ENCODE measurements at regions of chr10 and their contacts with region 1.

Region 1: DNA sequence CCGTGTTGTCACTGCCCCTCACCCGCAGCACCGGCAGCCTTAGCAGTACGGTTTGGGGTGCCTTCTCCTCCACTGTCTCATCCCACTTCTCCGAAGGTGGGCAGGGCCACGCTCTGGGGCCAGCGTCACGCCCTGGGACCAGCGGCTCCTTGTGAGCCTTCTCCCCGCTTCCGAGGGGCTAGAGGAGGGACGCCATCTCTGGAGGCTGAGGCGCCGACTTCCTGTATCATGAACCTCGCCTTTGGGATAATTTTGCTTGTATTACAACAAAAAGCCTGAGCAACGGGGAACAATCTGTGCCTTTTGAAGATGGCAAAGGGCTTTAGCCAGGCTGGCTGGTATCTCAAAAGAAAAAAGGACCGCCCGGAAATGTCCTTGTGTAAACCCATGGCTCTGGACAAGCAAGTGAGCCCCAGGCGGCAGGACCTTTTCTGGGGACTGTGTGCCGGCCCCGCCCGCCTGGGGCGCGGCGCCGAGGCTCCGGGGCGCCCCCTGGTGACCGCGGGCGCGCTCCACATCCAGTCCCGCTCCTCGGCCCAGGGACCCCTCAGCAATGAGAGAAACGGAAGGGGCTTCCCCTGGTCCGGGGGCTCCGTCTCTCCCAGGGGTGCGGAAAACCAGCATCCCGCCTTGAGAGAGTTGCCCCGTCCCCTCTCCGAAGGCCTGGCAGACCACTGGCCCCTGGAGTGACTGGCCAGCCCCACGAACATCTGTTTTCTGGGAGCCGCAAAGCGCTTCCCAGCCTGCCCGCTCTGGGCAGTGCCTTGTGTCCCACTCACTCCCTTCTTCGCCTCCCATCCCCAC is 3.8 kb downstream of the DEPP1 start:
- DNase-seq: peak; percentile 82 to 91 (median 88)
- ATAC-seq: peak; percentile 94
- H3K4me3 ChIP-seq: peak overlapping the region; percentile 35
- H3K27ac ChIP-seq: peak overlapping the region; percentile 51
- H3K4me1 ChIP-seq: peaks cover 29 to 51% of the 10 kb centered on the region in 2 experiments
- H3K27me3 ChIP-seq: peaks cover 0 to 4% of the 10 kb centered on the region in 2 experiments; a peak in 2 of 5 replicates
- CTCF ChIP-seq: peak; percentile 94 to 98 (median 97)
- EP300 ChIP-seq: no peak
- POLR2A ChIP-seq: peak; percentile 71
- RAD21 ChIP-seq: peak; percentile 88 to 89

Region 2: DNA sequence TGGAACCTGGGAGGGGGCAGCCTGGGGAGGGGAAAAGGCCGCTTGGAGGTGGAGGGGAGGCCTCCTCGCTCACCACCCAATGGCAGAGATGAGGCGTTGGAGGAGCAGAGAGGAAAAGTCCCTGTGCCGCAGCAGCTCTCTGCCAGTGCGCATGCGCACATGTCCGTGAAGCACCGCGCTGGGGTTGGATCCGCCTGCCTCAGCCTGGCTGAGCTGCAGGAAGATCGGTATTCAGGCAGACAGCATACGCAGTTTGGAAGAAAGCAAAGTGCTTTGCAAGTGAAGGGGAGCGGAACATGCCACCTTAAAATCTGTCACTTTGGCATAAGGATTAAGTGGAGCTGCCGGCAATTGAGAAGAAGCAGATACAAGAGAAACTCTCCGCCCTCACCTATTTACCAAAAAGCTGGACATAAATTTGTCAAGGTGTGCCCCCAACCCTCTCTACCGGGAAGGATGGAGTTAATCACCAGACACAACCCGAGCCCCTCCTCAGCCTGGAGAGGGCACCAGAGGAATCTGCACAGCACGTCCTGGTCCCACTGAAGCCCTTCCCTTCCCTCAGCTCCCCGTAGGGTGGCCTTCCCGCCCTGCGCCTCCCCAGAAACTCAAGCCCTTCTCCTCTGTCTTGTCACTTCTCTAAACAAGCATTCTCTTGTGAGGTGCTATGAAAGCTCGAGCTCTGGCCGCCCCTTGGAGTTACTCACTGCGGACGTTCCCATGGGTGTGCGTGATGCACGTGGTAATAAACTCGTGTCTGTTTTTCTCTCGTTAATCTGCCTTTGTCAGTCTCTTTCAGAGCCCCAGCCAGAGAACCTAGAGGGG is 95.9 kb before region 1 on chr10:
- CTCF ChIA-PET with region 1: no interaction called
- POLR2A ChIA-PET with region 1: no interaction called
- in situ Hi-C with region 1: no loop called
- intact Hi-C with region 1: loop called (anchors 5 kb)
- DNase-seq: peak; percentile 51 to 73 (median 68)
- ATAC-seq: peak; percentile 74
- H3K4me3 ChIP-seq: no peak overlapping the region
- H3K27ac ChIP-seq: no peak overlapping the region; the same call in 2 of the 3 replicates
- H3K4me1 ChIP-seq: peaks cover 0 to 4% of the 10 kb centered on the region in 2 experiments; a peak in 2 of 5 replicates
- H3K27me3 ChIP-seq: peaks cover 30 to 74% of the 10 kb centered on the region in 2 experiments
- CTCF ChIP-seq: peak in 2 of 3 experiments; percentile 20 to 32; a peak in 2 of 6 replicates
- EP300 ChIP-seq: no peak
- POLR2A ChIP-seq: no peak
- RAD21 ChIP-seq: peak; percentile 31 to 47; a peak in 3 of 4 replicates

Region 3: DNA sequence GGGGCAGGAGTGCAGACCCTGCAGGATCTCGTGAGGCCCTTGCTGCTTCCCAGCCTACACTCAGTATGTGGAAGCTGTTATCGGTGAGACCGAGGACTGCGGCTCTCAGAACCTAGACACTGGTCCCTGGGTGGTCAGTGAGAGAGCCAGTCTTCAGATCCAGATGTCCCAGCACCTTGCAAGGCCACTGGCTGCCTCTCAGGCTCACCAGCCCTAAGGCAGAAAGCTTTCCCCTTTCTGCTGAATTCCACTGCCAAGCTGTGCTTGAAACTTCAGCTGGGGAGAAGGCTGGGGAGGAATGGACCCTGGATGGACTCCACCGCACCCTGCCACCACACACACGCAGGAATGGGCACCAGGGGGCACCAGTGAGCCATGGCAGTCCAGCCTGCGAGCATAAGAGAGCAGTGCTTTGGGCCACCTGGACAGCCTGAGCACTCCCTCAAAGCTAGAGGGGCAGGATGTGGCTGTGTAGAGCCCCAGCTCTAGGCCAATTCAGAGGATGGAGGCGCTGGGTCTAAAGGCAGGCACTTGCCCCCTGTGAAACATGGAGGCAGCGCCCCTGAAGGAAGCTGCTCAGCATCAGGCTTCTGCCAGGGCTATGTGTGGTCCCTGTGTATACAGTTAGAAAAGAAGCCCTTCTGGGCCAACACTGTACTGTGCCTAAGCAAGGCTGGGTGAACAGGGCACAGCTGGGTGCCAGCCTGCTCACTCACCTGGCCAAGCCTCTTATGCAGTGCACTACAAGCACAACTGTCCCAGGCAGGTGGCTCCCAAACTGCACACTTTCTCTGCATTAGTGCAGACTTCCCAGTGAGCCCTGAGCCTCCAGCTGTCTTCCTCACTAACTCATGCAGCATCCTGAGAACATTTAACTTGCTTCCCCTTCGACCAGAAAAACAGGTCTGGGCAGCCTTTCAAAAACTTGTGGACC is 42.0 kb before region 1 on chr10:
- CTCF ChIA-PET with region 1: interaction called, 32 read pairs
- POLR2A ChIA-PET with region 1: interaction called, 4 read pairs
- in situ Hi-C with region 1: no loop called
- intact Hi-C with region 1: loop called (anchors 1 kb)
- DNase-seq: peak; percentile 67 to 85 (median 82)
- ATAC-seq: peak; percentile 99
- H3K4me3 ChIP-seq: no peak overlapping the region
- H3K27ac ChIP-seq: no peak overlapping the region
- H3K4me1 ChIP-seq: no peaks in the 10 kb centered on the region
- H3K27me3 ChIP-seq: peaks cover 9 to 50% of the 10 kb centered on the region in 2 experiments; a peak in 4 of 5 replicates
- CTCF ChIP-seq: peak; percentile 96 to 97 (median 97)
- EP300 ChIP-seq: no peak
- POLR2A ChIP-seq: no peak
- RAD21 ChIP-seq: peak; percentile 97 to 98

Measured in K562 (cell line).